Activated naive CD4-positive, alpha-beta T cell treated with anti-CD3 and anti-CD28 coated beads for 36 hours (primary cell): ENCODE measurements at regions of chr5 and their contacts with region 1.

Region 1: GRCh38 chr5:45696206-45696836 is at the start of gene HCN1:
- DNase-seq: peak; percentile 60
- H3K4me3 Mint-ChIP-seq: no peak within 1 kb of the TSS
- H3K27ac Mint-ChIP-seq: no peak within 1 kb of the TSS
- H3K4me1 Mint-ChIP-seq: peaks cover 5% of the 10 kb centered on the region
- H3K27me3 Mint-ChIP-seq: peaks cover 33% of the 10 kb centered on the region
- total RNA-seq, gene HCN1: not detected

Region 2: DNA sequence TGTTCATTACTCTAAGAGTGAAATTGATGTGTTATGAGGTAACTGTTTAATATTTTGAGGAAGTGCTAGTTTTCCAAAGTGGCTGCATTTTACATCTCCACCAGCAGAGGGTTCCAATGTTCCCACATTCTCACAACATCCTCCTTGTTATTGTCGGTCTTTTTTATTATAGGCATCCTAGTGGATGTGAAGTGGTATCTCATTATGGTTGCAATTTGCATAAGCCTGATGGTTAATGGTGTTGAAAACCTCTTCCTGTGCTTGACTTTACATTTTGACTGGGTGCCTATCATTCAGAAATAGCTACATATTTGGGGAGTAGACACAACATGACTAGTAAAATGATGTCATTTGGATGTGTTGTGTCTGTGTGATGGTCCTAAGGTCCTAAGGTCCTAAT is 743.9 kb before region 1 on chr5:
- CTCF ChIA-PET with region 1: no interaction called
- intact Hi-C with region 1: loop called (anchors 10 kb)
- DNase-seq: peak; percentile 5
- H3K4me3 Mint-ChIP-seq: no peak overlapping the region
- H3K27ac Mint-ChIP-seq: no peak overlapping the region
- H3K4me1 Mint-ChIP-seq: peaks cover 4% of the 10 kb centered on the region
- H3K27me3 Mint-ChIP-seq: no peaks in the 10 kb centered on the region

Region 3: GRCh38 chr5:45038366-45038987 is 657.8 kb before region 1 on chr5:
- CTCF ChIA-PET with region 1: no interaction called
- intact Hi-C with region 1: loop called (anchors 1 kb)
- DNase-seq: no peak
- H3K4me3 Mint-ChIP-seq: no peak overlapping the region
- H3K27ac Mint-ChIP-seq: no peak overlapping the region
- H3K4me1 Mint-ChIP-seq: no peaks in the 10 kb centered on the region
- H3K27me3 Mint-ChIP-seq: no peaks in the 10 kb centered on the region